Activated CD4-positive, alpha-beta T cell treated with anti-CD3 and anti-CD28 coated beads for 36 hours (primary cell): ENCODE measurements at regions of chr1 and their contacts with region 1.

Region 1: DNA sequence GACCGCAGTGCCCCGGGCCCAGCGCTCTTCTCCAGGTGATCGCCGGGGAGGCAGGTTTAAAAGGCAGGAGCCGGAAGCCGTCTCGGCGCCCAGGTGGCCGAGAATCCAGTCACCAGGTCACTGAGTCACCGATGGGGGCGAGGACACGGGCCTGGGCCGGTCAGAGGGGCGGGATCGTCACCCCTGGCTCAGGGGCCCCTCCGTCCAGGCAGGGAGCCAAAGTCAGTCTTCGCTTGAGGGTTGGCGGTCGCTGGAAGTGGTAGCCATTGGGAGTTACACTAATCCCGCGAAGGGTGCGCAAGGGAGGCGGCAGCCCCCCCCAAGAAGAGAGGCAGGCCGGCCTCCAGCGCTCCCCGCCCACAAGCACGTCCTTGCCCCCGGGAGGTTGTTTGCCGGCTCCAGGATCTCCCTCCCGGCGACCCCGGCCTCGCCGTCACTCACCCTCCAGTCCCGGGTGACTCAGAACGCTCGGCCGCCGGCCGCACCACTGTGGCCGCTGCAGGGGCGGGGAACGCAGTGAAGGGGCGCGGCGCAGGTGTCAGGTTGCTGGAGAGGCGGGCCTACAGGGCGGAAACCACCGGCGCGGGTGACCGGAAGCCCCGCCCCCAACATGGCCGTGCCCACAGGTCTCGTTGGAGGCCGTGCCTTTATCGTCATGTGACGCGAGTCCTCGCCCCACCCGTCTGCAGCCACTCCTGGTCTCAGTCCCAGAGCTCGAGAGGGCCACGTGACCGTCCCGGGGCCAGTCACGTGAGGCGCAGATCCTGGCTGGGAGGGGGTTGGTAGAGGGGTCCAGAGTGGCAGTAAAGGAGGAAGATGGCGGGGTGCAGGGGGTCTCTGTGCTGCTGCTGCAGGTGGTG is at the starts of genes CLCN6 and MTHFR:
- DNase-seq: peak; percentile 99
- ATAC-seq: peak; percentile 91
- H3K4me3 Mint-ChIP-seq: peak within 1 kb of the TSS; percentile 87
- H3K27ac Mint-ChIP-seq: peak within 1 kb of the TSS; percentile 87
- H3K4me1 Mint-ChIP-seq: peaks cover 57% of the 10 kb centered on the region
- H3K27me3 Mint-ChIP-seq: no peaks in the 10 kb centered on the region
- total RNA-seq, gene CLCN6: 9.4 to 9.5 TPM
- total RNA-seq, gene MTHFR: 11.2 to 11.6 TPM

Region 2: DNA sequence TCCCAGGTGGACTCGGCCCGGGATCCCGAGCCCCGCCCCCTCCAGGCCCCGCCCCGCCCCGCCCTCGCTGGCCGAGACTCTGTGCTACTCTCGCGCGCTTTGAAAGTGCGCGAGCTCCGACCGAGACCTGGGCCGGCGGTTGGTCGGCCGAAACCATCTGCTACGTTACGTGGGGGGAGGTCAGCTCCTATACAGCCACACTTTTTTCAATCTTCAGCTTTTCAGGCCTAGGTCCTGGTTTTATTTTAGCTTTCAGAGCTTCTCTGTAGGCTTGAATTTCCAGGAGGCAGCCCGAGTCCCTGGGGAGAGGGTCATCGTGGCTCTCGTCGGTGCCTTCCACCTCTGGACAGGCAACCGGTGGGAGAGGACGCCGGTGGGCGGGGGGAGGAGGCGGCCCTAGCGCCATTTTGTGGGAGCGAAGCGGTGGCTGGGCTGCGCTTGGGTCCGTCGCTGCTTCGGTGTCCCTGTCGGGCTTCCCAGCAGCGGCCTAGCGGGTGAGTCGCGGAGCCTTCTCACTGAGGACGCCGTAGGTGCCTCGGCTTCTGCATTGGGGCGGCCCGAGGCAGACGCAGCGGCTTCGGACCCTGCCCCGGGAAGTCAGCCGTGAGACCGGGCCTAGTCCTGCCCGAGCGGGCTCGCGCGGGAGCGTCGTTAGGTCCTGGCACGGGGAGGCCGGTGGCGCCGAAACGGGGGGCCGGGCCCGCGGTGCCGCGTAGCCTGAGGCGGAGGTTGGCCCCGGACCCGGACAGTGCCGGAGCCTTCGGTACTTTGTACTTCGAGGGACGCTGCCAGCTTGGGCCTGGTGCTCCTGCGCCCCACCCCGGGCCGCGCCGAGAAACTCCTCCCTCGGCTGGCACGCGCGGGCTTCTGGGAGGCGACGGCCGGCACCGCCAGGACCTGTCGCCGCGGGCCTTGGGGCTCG is 793.2 kb before region 1 on chr1 and contains the start of gene TARDBP:
- CTCF ChIA-PET with region 1: no interaction called
- POLR2A ChIA-PET with region 1: no interaction called
- intact Hi-C with region 1: loop called (anchors 1 to 5 kb)
- DNase-seq: peak; percentile 94
- ATAC-seq: peak; percentile 89
- H3K4me3 Mint-ChIP-seq: peak within 1 kb of the TSS; percentile 93
- H3K27ac Mint-ChIP-seq: peak within 1 kb of the TSS; percentile 99
- H3K4me1 Mint-ChIP-seq: peaks cover 30% of the 10 kb centered on the region
- H3K27me3 Mint-ChIP-seq: no peaks in the 10 kb centered on the region
- total RNA-seq, gene TARDBP: 180 to 190 TPM

Region 3: GRCh38 chr1:11262171-11263049 is 543.3 kb before region 1 on chr1 and contains the start of gene MTOR:
- CTCF ChIA-PET with region 1: no interaction called
- POLR2A ChIA-PET with region 1: no interaction called
- intact Hi-C with region 1: loop called in 1 of 2 experiments (anchors 2 kb)
- DNase-seq: peak; percentile 98
- ATAC-seq: peak; percentile 98
- H3K4me3 Mint-ChIP-seq: peak within 1 kb of the TSS; percentile 90
- H3K27ac Mint-ChIP-seq: peak within 1 kb of the TSS; percentile 87
- H3K4me1 Mint-ChIP-seq: peaks cover 15% of the 10 kb centered on the region
- H3K27me3 Mint-ChIP-seq: no peaks in the 10 kb centered on the region
- total RNA-seq, gene MTOR: 32.3 to 36.3 TPM

Region 4: DNA sequence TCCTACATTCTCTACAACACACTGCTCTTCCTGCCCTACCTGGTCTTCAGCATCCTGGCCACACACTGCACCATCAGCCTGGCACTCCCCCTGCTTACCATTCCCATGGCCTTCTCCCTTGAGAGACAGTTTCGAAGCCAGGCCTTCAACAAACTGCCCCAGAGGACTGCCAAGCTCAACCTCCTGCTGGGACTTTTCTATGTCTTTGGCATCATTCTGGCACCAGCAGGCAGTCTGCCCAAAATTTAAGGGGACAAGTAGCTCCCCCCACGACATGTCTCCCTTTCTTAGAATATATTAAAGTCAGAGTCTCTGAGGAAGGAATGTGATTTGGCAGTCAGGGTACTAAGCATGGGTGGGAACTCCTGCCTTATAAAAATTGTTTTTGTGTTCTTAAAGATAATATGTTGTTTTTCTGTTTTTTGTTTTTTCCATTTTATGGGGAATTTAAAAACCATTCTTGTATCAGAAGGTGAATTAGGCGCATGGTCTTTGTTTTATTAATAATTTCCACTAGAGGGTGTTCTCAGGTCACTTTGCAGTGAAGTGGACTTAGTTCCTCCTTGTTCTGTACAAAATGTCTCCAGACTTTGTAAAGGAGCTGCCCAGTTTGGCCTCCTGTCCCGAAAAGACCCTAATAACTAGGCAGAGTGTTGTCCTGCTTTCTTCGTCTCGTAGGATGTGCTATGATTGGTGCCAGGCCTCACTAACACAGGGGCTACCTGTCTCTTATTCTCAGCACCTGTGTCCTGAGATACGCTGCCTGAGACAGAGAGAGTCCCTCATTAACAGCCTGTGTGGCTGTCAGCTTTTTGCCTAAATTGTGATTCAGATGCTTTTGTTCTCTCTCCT is 519.6 kb before region 1 on chr1:
- CTCF ChIA-PET with region 1: no interaction called
- POLR2A ChIA-PET with region 1: no interaction called
- intact Hi-C with region 1: no loop called
- DNase-seq: no peak
- ATAC-seq: no peak
- H3K4me3 Mint-ChIP-seq: no peak overlapping the region
- H3K27ac Mint-ChIP-seq: peak overlapping the region; percentile 90
- H3K4me1 Mint-ChIP-seq: peaks cover 83% of the 10 kb centered on the region
- H3K27me3 Mint-ChIP-seq: no peaks in the 10 kb centered on the region

Region 5: GRCh38 chr1:11654137-11654938 is 151.3 kb before region 1 on chr1 and contains the starts of genes FBXO2 and FBXO44:
- CTCF ChIA-PET with region 1: interaction called, 3 read pairs
- POLR2A ChIA-PET with region 1: no interaction called
- intact Hi-C with region 1: loop called in 1 of 2 experiments (anchors 2 kb)
- DNase-seq: peak; percentile 85
- ATAC-seq: peak; percentile 82
- H3K4me3 Mint-ChIP-seq: peak within 1 kb of the TSS; percentile 73
- H3K27ac Mint-ChIP-seq: no peak within 1 kb of the TSS
- H3K4me1 Mint-ChIP-seq: peaks cover 25% of the 10 kb centered on the region
- H3K27me3 Mint-ChIP-seq: no peaks in the 10 kb centered on the region
- total RNA-seq, gene FBXO2: 1.6 to 2.1 TPM
- total RNA-seq, gene FBXO44: 20.2 to 21.8 TPM

Region 6: GRCh38 chr1:11749203-11749689 is 56.4 kb before region 1 on chr1:
- CTCF ChIA-PET with region 1: no interaction called
- POLR2A ChIA-PET with region 1: no interaction called
- intact Hi-C with region 1: no loop called
- DNase-seq: peak; percentile 84
- ATAC-seq: peak; percentile 98
- H3K4me3 Mint-ChIP-seq: no peak overlapping the region
- H3K27ac Mint-ChIP-seq: peak overlapping the region; percentile 74
- H3K4me1 Mint-ChIP-seq: peaks cover 6% of the 10 kb centered on the region
- H3K27me3 Mint-ChIP-seq: no peaks in the 10 kb centered on the region

Region 7: DNA sequence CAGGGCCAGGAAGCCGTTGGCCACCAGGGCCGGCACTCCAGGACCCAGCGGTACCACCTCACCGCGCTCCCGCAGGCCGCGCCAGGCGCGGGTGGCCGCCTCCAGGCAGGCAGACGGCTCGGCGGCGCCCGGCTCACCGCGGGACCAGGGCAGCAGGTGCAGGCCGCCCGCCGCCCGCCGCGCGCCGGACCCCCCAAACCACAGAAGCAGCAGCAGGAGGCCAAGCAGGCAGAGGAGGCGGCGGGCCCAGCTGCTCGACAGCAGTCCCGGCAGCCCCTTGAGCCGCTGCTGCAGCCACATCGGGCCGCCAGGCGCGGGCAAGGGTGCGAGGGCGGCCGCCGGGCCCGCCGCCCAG is 120.2 kb after region 1 on chr1:
- CTCF ChIA-PET with region 1: no interaction called
- POLR2A ChIA-PET with region 1: no interaction called
- intact Hi-C with region 1: loop called in 1 of 2 experiments (anchors 1 kb)
- DNase-seq: no peak
- ATAC-seq: peak; percentile 21
- H3K4me3 Mint-ChIP-seq: peak overlapping the region; percentile 77
- H3K27ac Mint-ChIP-seq: no peak overlapping the region
- H3K4me1 Mint-ChIP-seq: peaks cover 30% of the 10 kb centered on the region
- H3K27me3 Mint-ChIP-seq: no peaks in the 10 kb centered on the region

Region 8: GRCh38 chr1:12019858-12020509 is 214.3 kb after region 1 on chr1:
- CTCF ChIA-PET with region 1: no interaction called
- POLR2A ChIA-PET with region 1: no interaction called
- intact Hi-C with region 1: loop called in 1 of 2 experiments (anchors 1 kb)
- DNase-seq: no peak
- ATAC-seq: no peak
- H3K4me3 Mint-ChIP-seq: peak overlapping the region; percentile 83
- H3K27ac Mint-ChIP-seq: peak overlapping the region; percentile 74
- H3K4me1 Mint-ChIP-seq: peaks cover 2% of the 10 kb centered on the region
- H3K27me3 Mint-ChIP-seq: no peaks in the 10 kb centered on the region